ENCODE measurements at regions of chr6 and their contacts with region 1.

Region 1: GRCh38 chr6:100137759-100138158 is 143.7 kb upstream of the MCHR2 start:
- DNase-seq: no peak
- H3K27ac ChIP-seq: no peak overlapping the region
- CTCF ChIP-seq: no peak

Region 2: GRCh38 chr6:100088009-100088408 is 49.8 kb before region 1 on chr6:
- CTCF ChIA-PET with region 1: interaction called, 12 read pairs
- POLR2A ChIA-PET with region 1: no interaction called
- DNase-seq: peak; percentile 34
- H3K27ac ChIP-seq: no peak overlapping the region
- CTCF ChIP-seq: no peak